PC-9 (cell line): ENCODE measurements at regions of chr19 and their contacts with region 1.

Region 1: DNA sequence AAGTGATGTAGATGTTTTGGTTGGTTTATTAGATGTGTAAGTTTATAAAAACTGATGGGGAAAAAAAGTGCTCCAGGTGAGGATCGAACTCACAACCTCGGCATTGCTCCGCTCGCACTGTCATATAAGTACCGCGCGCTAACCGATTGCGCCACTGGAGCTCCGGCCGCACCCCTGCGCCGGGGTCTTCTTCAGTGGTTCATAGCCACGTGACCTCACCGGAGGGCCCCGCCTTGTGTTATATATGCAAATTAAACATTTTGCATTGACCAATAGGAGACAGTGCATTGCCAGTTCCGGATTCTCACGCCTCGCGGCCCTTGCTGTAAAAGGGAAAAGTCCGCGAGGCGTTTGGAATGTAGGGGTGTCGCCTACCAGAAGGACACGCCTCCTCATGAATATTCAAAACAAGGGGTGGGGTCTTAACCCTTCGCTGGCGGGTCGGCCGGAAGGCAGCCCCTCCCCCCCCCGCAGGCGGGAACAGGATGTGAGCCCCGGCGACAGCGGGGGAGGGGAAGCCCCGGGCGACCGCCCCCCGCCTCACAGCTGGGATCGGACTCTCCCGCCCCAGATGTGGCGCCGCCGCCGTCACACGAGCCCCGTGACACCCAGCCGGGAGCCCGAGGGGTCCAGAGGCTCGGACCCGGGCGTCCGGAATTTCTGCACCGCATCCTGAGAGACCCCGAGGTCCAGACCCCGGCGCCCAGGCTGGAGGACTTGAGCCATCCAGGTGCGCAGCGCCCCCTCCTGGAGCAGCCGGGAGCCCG is at the start of gene PLEKHG2:
- DNase-seq: peak; percentile 97
- H3K4me3 ChIP-seq: peak within 1 kb of the TSS; percentile 92
- H3K27ac ChIP-seq: 0 out of 2 replicates have a peak within 1 kb of the TSS, but pooled peaks have one; percentile 93
- H3K4me1 ChIP-seq: peaks cover 30% of the 10 kb centered on the region
- H3K27me3 ChIP-seq: no peaks in the 10 kb centered on the region
- CTCF ChIP-seq: peak; percentile 92
- total RNA-seq, gene PLEKHG2: 26.1 and 32.1 TPM in 2 replicates

Region 2: DNA sequence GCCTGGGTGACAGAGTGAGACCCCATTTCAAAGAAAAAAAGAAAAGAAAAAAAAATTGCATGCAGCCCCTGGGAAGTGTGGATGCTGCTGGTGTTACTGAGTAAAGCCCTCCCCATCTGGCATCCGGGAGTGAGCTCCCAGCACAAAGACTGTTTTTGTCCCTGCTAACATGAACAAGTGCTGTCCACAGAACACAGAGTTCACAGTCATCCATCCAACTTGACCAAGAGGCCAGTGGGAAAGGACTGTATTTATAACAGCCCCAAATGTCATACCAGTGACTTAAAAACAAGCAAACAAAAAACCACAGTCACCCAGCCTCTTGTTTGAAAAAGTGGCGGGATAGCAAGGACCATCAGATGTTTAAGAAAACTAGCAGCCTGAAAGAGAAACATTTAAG is 447.5 kb before region 1 on chr19:
- CTCF ChIA-PET with region 1: interaction called, 3 read pairs
- POLR2A ChIA-PET with region 1: no interaction called
- intact Hi-C with region 1: loop called (anchors 5 kb)
- DNase-seq: no peak
- H3K4me3 ChIP-seq: no peak overlapping the region
- H3K27ac ChIP-seq: no peak overlapping the region
- H3K4me1 ChIP-seq: no peaks in the 10 kb centered on the region
- H3K27me3 ChIP-seq: no peaks in the 10 kb centered on the region
- CTCF ChIP-seq: no peak

Region 3: DNA sequence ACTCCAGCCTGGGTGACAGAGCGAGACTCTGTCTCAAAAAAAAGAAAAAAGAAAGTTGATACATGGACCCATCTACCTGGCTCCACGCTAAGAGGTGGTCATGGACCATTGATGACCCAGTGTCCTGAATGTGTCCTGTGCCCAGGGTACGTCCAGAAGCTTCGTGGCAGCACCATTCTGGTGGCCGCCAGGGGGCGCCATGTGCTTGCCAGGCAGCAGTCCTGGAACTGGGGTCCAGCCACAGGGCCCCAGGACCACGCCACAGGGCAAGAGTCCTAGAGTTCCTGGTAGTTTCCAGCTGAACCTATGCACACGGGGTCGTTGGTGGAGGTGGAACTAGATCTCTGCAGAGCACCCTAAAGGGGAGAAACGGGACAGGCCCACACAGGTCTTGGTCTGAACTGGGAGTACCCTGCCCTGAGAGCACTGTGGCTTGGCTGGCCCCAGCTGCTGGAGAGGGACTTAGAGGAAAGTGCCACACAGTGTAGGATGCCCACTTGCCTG is 360.0 kb before region 1 on chr19:
- CTCF ChIA-PET with region 1: no interaction called
- POLR2A ChIA-PET with region 1: no interaction called
- intact Hi-C with region 1: loop called (anchors 5 kb)
- DNase-seq: peak; percentile 45 to 72
- H3K4me3 ChIP-seq: no peak overlapping the region
- H3K27ac ChIP-seq: no peak overlapping the region
- H3K4me1 ChIP-seq: peaks cover under 1% of the 10 kb centered on the region; the same call in 1 of the 2 replicates
- H3K27me3 ChIP-seq: no peaks in the 10 kb centered on the region
- CTCF ChIP-seq: peak; percentile 96

Region 4: GRCh38 chr19:39212375-39212742 is 199.9 kb before region 1 on chr19:
- CTCF ChIA-PET with region 1: no interaction called
- POLR2A ChIA-PET with region 1: no interaction called
- intact Hi-C with region 1: loop called (anchors 2 kb)
- DNase-seq: peak in 1 of 2 experiments; percentile 40
- H3K4me3 ChIP-seq: no peak overlapping the region
- H3K27ac ChIP-seq: no peak overlapping the region
- H3K4me1 ChIP-seq: no peaks in the 10 kb centered on the region
- H3K27me3 ChIP-seq: no peaks in the 10 kb centered on the region
- CTCF ChIP-seq: peak; percentile 59

Region 5: GRCh38 chr19:39390755-39391592 is 21.3 kb before region 1 on chr19 and contains the starts of genes MED29 and PAF1:
- CTCF ChIA-PET with region 1: no interaction called
- POLR2A ChIA-PET with region 1: interaction called, 9 read pairs
- intact Hi-C with region 1: loop called (anchors 1 kb)
- DNase-seq: peak; percentile 96 to 98
- H3K4me3 ChIP-seq: peak within 1 kb of the TSS; percentile 97
- H3K27ac ChIP-seq: peak within 1 kb of the TSS; percentile 86
- H3K4me1 ChIP-seq: peaks cover 14% of the 10 kb centered on the region
- H3K27me3 ChIP-seq: no peaks in the 10 kb centered on the region
- CTCF ChIP-seq: no peak; the same call in 1 of the 2 replicates
- total RNA-seq, gene MED29: 18.6 and 30.9 TPM in 2 replicates
- total RNA-seq, gene PAF1: 54.3 and 61.1 TPM in 2 replicates

Region 6: GRCh38 chr19:39435499-39436349 is 23.4 kb after region 1 on chr19 and contains the start of gene RPS16:
- CTCF ChIA-PET with region 1: interaction called, 5 read pairs
- POLR2A ChIA-PET with region 1: interaction called, 21 read pairs
- intact Hi-C with region 1: loop called (anchors 1 kb)
- DNase-seq: peak; percentile 91 to 99
- H3K4me3 ChIP-seq: peak within 1 kb of the TSS; percentile 91
- H3K27ac ChIP-seq: peak within 1 kb of the TSS; percentile 97
- H3K4me1 ChIP-seq: peaks cover 58% of the 10 kb centered on the region
- H3K27me3 ChIP-seq: no peaks in the 10 kb centered on the region
- CTCF ChIP-seq: no peak
- total RNA-seq, gene RPS16: 2,510 and 2,860 TPM in 2 replicates

Region 7: DNA sequence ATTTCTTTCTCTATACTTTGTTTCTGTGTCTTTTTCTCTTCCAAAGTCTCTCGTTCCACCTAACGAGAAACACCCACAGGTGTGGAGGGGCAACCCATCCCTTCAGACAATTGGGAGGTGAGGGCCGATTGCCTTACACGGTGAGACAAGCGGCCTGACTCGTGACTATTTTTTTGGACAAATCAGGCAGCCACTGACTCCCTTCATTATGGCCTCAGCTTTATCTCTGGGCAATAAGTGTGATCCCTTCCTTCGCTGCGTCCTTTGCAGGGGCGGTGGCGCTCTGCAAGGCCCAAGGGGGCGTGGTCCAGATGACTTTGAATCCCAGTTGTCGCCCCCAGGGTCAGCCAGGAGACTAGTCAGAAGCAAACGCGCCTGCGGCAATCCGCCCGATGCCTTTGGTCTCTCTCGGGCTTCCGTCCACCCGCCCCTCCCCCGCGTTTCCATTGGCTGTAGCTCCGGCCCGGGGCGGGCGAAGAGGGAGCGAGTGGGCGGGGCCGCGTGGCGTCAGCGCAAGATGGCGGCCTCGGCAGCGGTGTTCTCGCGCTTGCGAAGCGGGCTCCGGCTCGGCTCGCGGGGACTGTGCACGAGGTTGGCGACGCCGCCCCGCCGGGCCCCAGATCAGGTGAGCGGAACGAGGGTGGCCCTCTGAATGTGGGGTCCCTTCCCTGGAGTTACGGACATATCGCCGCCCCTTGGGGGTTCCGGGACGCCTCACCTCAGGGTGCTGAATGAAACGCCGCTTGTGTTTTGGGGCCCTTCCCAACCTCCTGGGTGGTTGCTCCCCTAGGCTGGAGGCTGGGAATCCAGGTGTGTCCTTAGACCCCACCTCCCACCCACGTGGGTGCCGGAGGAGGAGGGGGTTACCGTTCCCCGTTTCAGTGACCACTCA is 68.3 kb after region 1 on chr19 and contains the start of gene TIMM50:
- CTCF ChIA-PET with region 1: no interaction called
- POLR2A ChIA-PET with region 1: no interaction called
- intact Hi-C with region 1: loop called (anchors 1 kb)
- DNase-seq: peak; percentile 88 to 98
- H3K4me3 ChIP-seq: peak within 1 kb of the TSS; percentile 99
- H3K27ac ChIP-seq: peak within 1 kb of the TSS; percentile 94
- H3K4me1 ChIP-seq: peaks cover 13% of the 10 kb centered on the region; the same call in 1 of the 2 replicates
- H3K27me3 ChIP-seq: no peaks in the 10 kb centered on the region
- CTCF ChIP-seq: no peak
- total RNA-seq, gene TIMM50: 85.5 and 95.9 TPM in 2 replicates